Tibial artery (tissue), 4 donors: ENCODE measurements at regions of chr2 and their contacts with region 1.

Region 1: DNA sequence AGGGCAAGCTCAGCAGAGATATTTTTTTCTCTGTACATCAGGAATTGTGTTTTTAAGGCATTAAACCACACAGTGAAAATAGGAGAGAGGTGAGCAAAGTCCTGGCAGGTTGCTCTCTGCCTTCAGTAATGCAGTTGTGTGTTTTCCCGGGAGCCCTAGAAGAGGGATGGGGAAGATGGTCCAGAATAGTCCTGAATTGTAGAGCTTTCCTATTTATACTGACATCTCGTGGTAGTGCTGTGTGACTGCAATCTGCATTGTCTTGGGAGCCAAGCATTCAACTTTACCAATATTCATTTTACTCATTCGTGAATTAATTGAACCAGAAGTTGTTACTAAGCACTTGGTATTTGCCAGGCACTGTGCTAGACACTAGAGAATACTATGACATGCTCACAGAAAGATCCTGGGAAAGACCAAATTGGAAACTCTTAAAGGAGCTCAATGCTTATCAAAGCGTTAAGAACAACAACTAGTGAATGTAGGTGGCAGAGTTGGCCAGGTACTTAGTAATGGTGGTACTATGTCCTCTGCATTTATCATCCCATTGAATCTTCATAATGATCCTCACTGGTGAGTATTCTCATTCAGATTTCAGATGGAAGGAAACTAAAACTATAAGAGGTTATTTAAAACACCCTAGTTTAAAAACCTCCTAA is 214.6 kb downstream of the TRIB2 start:
- DNase-seq: no peak
- H3K4me3 ChIP-seq: no peak overlapping the region
- H3K27ac ChIP-seq: no peak overlapping the region
- H3K4me1 ChIP-seq: peaks cover 0 to 27% (median 5%) of the 10 kb centered on the region in 4 donors
- H3K27me3 ChIP-seq: no peaks in the 10 kb centered on the region
- CTCF ChIP-seq: peak; percentile 82 to 89

Region 2: GRCh38 chr2:11056614-11057013 is 1874.7 kb before region 1 on chr2:
- intact Hi-C with region 1: no loop called
- DNase-seq: no peak
- H3K4me3 ChIP-seq: no peak overlapping the region
- H3K27ac ChIP-seq: no peak overlapping the region
- H3K4me1 ChIP-seq: no peaks in the 10 kb centered on the region
- H3K27me3 ChIP-seq: no peaks in the 10 kb centered on the region
- CTCF ChIP-seq: no peak

Region 3: GRCh38 chr2:11829947-11830707 is 1101.2 kb before region 1 on chr2:
- intact Hi-C with region 1: loop called (anchors 10 kb)
- DNase-seq: peak; percentile 62 to 81
- H3K4me3 ChIP-seq: peak overlapping the region; percentile 22 to 46
- H3K27ac ChIP-seq: peak overlapping the region; percentile 46 to 62
- H3K4me1 ChIP-seq: peaks cover 0 to 24% (median 13%) of the 10 kb centered on the region in 4 donors
- H3K27me3 ChIP-seq: no peaks in the 10 kb centered on the region
- CTCF ChIP-seq: peak in 1 of 2 experiments; percentile 4

Region 4: GRCh38 chr2:11863513-11864328 is 1067.6 kb before region 1 on chr2:
- intact Hi-C with region 1: loop called (anchors 5 kb)
- DNase-seq: peak; percentile 83 to 92
- H3K4me3 ChIP-seq: peak overlapping the region; percentile 10 to 34
- H3K27ac ChIP-seq: peak overlapping the region; percentile 18 to 32
- H3K4me1 ChIP-seq: peaks cover 0 to 6% (median 4%) of the 10 kb centered on the region in 4 donors
- H3K27me3 ChIP-seq: no peaks in the 10 kb centered on the region
- CTCF ChIP-seq: peak; percentile 92 to 93

Region 5: GRCh38 chr2:12416600-12416999 is 514.7 kb before region 1 on chr2:
- intact Hi-C with region 1: loop called (anchors 10 kb)
- DNase-seq: peak; percentile 35 to 72
- H3K4me3 ChIP-seq: no peak overlapping the region
- H3K27ac ChIP-seq: no peak overlapping the region
- H3K4me1 ChIP-seq: peaks cover 0 to 10% (median 6%) of the 10 kb centered on the region in 4 donors
- H3K27me3 ChIP-seq: no peaks in the 10 kb centered on the region
- CTCF ChIP-seq: peak; percentile 54

Region 6: GRCh38 chr2:12555012-12555645 is 376.2 kb before region 1 on chr2:
- intact Hi-C with region 1: loop called (anchors 10 kb)
- DNase-seq: no peak
- H3K4me3 ChIP-seq: no peak overlapping the region
- H3K27ac ChIP-seq: peak overlapping the region; percentile 20 to 29
- H3K4me1 ChIP-seq: peaks cover 0 to 25% (median 12%) of the 10 kb centered on the region in 4 donors
- H3K27me3 ChIP-seq: no peaks in the 10 kb centered on the region
- CTCF ChIP-seq: peak in 1 of 2 experiments; percentile 16

Region 7: GRCh38 chr2:12948961-12949353 is 17.6 kb after region 1 on chr2:
- intact Hi-C with region 1: no loop called
- DNase-seq: no peak
- H3K4me3 ChIP-seq: no peak overlapping the region
- H3K27ac ChIP-seq: no peak overlapping the region
- H3K4me1 ChIP-seq: no peaks in the 10 kb centered on the region
- H3K27me3 ChIP-seq: no peaks in the 10 kb centered on the region
- CTCF ChIP-seq: no peak